ENCODE measurements at regions of chr14 and their contacts with region 1.

Region 1: DNA sequence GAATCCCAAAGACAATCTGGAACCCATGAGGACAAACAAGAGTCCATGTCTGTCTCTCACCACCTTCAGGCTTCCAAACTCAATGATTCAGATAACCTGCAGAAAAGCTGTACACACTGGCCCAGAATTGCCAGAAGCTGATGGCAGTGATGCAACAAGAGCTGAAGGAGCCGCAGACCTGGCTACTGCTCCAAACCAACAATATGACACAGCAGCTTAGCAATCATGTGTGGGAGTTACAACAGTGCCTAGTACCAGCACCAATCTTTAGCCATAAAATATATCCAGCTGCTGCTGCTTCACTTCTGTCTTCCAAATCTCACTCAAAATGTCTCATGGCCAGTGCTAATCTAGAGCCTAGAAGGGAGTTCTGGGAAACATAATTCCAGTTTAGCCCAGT is 22.0 kb downstream of the RPS6KA5 start:
- DNase-seq: peak; percentile 24
- ATAC-seq: peak; percentile 41
- H3K4me3 Mint-ChIP-seq: no peak overlapping the region
- H3K27ac Mint-ChIP-seq: peak overlapping the region; percentile 49
- H3K4me1 Mint-ChIP-seq: peaks cover 64% of the 10 kb centered on the region
- H3K27me3 Mint-ChIP-seq: no peaks in the 10 kb centered on the region

Region 2: DNA sequence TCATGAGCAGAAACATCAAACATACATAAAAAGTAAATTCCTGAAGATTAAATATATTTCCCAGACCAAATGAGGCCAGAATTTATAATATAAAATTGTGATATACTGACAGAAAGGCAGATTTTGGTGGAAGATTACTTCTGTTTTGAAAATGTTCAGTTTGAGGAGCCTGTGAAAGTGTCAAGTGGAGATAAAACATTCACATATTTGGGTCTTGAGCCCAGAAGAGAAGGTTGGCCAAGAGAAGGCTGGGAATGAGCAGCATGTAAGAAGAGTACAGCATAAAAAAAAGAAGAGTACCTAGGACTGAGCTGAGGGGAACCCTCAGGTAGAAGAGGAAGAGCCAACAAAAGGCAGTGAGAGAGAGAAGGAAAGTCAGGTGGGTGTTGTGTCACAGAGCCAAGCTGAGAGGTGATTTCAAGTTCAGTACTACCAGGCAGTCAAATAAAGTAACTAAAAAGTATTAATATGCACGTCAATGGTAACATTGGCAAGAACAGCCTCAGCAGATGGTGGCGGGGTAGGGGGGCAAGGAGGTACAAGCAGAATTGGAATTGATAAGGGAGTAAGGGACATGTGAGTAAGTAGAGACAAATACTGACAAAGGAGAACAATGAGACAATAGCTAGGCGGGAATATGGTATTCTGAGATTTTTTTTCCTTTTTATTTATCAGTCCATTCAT is 101.5 kb before region 1 on chr14:
- CTCF ChIA-PET with region 1: no interaction called
- POLR2A ChIA-PET with region 1: no interaction called
- intact Hi-C with region 1: no loop called
- DNase-seq: no peak
- ATAC-seq: no peak
- H3K4me3 Mint-ChIP-seq: no peak overlapping the region
- H3K27ac Mint-ChIP-seq: no peak overlapping the region
- H3K4me1 Mint-ChIP-seq: peaks cover 2% of the 10 kb centered on the region
- H3K27me3 Mint-ChIP-seq: no peaks in the 10 kb centered on the region

Region 3: DNA sequence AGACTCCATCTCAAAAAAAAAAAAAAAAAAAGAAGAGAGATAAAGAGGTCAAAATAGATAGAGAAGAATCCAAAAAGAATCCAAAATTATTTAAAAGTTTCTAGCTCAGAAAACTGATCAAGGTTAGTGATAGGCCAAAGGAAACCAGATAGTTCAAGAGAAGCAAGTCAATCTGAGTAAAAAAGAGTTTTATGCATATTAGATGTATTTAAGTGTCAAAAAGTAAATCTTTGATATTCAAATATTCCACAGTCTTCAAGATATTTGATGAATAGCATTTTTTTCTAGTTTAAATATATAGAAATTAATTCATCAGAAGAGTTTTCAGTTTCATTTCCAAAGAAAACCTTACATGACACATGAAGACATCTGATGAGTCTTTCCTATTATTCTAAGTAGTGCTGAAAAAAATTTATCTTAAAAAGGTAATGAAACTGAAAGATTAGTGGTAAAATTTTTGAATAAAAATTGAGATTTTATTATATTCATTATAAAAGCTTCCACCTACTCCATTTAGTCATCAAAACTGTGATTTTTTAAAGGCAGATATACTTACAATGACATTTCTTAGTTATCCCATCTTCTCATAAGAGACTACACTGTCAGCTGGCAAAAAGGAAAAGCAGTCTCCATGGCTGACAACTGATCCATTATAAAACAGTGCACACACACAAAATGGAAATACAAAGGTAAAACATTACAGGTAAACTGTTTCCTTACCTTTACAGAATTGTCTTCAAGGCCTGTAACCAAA is 46.6 kb before region 1 on chr14:
- CTCF ChIA-PET with region 1: interaction called, 3 read pairs
- POLR2A ChIA-PET with region 1: no interaction called
- intact Hi-C with region 1: loop called in 1 of 2 experiments (anchors 5 kb)
- DNase-seq: no peak
- ATAC-seq: peak; percentile 31
- H3K4me3 Mint-ChIP-seq: peak overlapping the region; percentile 31
- H3K27ac Mint-ChIP-seq: peak overlapping the region; percentile 59
- H3K4me1 Mint-ChIP-seq: peaks cover 52% of the 10 kb centered on the region
- H3K27me3 Mint-ChIP-seq: no peaks in the 10 kb centered on the region

Region 4: GRCh38 chr14:91755528-91756295 is 717.3 kb after region 1 on chr14:
- CTCF ChIA-PET with region 1: no interaction called
- POLR2A ChIA-PET with region 1: no interaction called
- intact Hi-C with region 1: no loop called
- DNase-seq: no peak
- ATAC-seq: no peak
- H3K4me3 Mint-ChIP-seq: no peak overlapping the region
- H3K27ac Mint-ChIP-seq: no peak overlapping the region
- H3K4me1 Mint-ChIP-seq: no peaks in the 10 kb centered on the region
- H3K27me3 Mint-ChIP-seq: no peaks in the 10 kb centered on the region